ENCODE measurements at regions of chr1 and their contacts with region 1.

Region 1: GRCh38 chr1:109643385-109644230 is 12.3 kb upstream of the GSTM4 start:
- DNase-seq: peak; percentile 91

Region 2: GRCh38 chr1:109399326-109399957 is 244.2 kb before region 1 on chr1:
- CTCF ChIA-PET with region 1: no interaction called
- POLR2A ChIA-PET with region 1: no interaction called
- DNase-seq: peak; percentile 41

Region 3: GRCh38 chr1:109539676-109540075 is 103.9 kb before region 1 on chr1 and contains the start of gene GPR61:
- CTCF ChIA-PET with region 1: interaction called, 42 read pairs
- POLR2A ChIA-PET with region 1: interaction called, 3 read pairs
- DNase-seq: no peak

Region 4: DNA sequence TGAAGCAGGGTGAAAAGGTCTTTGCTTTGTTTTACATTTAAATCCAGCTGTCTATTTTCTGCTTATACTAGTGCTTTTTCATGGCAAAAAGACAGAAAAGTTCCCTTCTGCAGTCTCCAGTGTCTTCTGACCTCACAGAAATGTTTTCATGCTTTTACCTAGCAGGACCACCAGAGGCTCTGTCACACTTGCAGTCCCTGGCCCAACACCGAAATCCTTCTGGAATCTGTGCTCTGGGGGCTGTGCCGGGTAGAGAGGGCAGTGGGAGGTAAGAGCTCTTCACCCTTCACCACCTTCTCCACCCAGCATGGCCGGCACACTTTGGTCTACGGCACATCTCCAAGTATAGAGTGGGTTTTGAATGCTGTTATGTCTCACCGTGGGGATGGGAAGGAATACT is 45.0 kb before region 1 on chr1:
- CTCF ChIA-PET with region 1: interaction called, 13 read pairs
- POLR2A ChIA-PET with region 1: no interaction called
- DNase-seq: peak; percentile 51

Region 5: GRCh38 chr1:109630081-109630897 is 13.3 kb before region 1 on chr1:
- CTCF ChIA-PET with region 1: interaction called, 42 read pairs
- POLR2A ChIA-PET with region 1: no interaction called
- DNase-seq: peak; percentile 63

Region 6: DNA sequence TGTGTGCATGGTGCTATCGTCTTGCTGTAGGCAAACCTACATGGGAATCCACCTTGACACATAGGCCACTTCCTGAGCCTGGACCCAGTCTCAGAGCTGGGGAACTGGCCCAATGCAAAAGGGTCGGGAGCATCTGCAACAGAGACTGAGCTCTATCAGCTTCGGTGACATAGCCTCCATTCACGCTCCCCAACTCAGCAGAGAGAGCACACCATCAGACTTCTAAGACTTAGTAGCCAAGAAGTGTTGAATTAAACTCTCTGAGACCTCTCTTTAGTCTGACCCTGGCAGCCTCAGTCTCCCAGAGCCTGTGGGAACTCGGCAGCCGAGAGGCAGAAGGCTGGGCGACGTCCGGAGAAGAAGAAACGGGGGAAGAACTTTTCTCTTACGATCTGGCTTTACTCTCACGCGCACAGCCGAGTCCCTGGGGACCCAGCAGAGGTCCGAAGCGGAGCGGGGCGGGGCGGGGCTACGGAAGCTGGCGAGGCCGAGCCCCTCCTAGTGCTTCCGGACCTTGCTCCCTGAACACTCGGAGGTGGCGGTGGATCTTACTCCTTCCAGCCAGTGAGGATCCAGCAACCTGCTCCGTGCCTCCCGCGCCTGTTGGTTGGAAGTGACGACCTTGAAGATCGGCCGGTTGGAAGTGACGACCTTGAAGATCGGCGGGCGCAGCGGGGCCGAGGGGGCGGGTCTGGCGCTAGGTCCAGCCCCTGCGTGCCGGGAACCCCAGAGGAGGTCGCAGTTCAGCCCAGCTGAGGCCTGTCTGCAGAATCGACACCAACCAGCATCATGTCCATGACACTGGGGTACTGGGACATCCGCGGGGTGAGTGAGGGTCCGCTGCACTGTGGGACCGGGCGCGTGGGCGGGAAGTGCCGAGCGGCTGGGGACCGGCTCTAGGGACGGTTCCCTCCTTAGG is 12.3 kb after region 1 on chr1 and contains the start of gene GSTM4:
- CTCF ChIA-PET with region 1: interaction called, 65 read pairs
- POLR2A ChIA-PET with region 1: no interaction called
- DNase-seq: peak; percentile 71

Region 7: GRCh38 chr1:109722908-109723691 is 79.5 kb after region 1 on chr1:
- CTCF ChIA-PET with region 1: no interaction called
- POLR2A ChIA-PET with region 1: no interaction called
- DNase-seq: no peak

Region 8: GRCh38 chr1:109773146-109773899 is 129.7 kb after region 1 on chr1:
- CTCF ChIA-PET with region 1: interaction called, 118 read pairs
- POLR2A ChIA-PET with region 1: interaction called, 5 read pairs
- DNase-seq: peak; percentile 91